CD8-positive, alpha-beta memory T cell (primary cell): ENCODE measurements at regions of chr7 and their contacts with region 1.

Region 1: DNA sequence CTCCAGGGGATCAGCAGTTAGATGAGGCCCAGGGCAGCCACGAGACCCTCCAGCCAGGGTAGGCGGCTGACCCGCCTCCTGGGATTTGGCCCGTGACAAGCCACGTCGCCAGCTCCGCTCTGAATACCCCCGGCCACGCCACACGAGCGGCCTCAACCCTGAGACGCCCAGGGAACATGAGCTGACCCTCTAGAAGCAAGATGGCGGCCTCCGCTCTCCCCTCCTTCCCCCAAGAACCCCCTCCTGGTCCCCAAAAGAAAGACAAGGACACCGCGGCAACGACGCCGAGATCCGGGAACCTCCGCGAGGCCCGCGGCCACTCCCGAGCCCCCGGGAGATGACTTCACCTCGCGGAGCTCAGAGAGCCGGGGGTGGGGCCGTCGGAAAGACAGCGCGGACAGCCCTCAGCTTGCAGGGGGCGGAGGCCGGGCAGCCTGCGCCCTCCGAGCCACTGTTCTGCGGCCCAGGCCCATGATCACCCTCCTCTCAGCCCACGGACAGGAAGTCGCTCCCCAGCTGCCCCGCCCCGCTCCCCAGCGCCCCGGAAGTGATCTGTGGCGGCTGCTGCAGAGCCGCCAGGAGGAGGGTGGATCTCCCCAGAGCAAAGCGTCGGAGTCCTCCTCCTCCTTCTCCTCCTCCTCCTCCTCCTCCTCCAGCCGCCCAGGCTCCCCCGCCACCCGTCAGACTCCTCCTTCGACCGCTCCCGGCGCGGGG is at the start of gene RALA:
- DNase-seq: peak; percentile 85 to 91 (median 86)
- H3K4me3 ChIP-seq: peak within 1 kb of the TSS; percentile 75
- H3K4me3 Mint-ChIP-seq: peak within 1 kb of the TSS; percentile 89 to 97 (median 94)
- H3K27ac ChIP-seq: peak within 1 kb of the TSS; percentile 83
- H3K27ac Mint-ChIP-seq: peak within 1 kb of the TSS; percentile 87 to 98 (median 93)
- H3K4me1 ChIP-seq: peaks cover 51% of the 10 kb centered on the region
- H3K4me1 Mint-ChIP-seq: peaks cover 42 to 54% (median 53%) of the 10 kb centered on the region in 3 donors
- H3K27me3 ChIP-seq: no peaks in the 10 kb centered on the region
- H3K27me3 Mint-ChIP-seq: no peaks in the 10 kb centered on the region
- total RNA-seq, gene RALA: 32.9 to 33.0 TPM

Region 2: GRCh38 chr7:39580149-39580874 is 42.9 kb before region 1 on chr7:
- CTCF ChIA-PET with region 1: interaction called, 30 read pairs
- POLR2A ChIA-PET with region 1: no interaction called
- DNase-seq: peak; percentile 59 to 82 (median 66)
- H3K4me3 ChIP-seq: no peak overlapping the region
- H3K4me3 Mint-ChIP-seq: no peak overlapping the region
- H3K27ac ChIP-seq: no peak overlapping the region
- H3K27ac Mint-ChIP-seq: peak overlapping the region in 1 of 8 donors; percentile 10
- H3K4me1 ChIP-seq: no peaks in the 10 kb centered on the region
- H3K4me1 Mint-ChIP-seq: peaks cover 3 to 4% (median 4%) of the 10 kb centered on the region in 3 donors
- H3K27me3 ChIP-seq: no peaks in the 10 kb centered on the region
- H3K27me3 Mint-ChIP-seq: no peaks in the 10 kb centered on the region

Region 3: GRCh38 chr7:39605087-39605486 is 18.1 kb before region 1 on chr7:
- CTCF ChIA-PET with region 1: no interaction called
- POLR2A ChIA-PET with region 1: no interaction called
- DNase-seq: no peak
- H3K4me3 ChIP-seq: no peak overlapping the region
- H3K4me3 Mint-ChIP-seq: peak overlapping the region in 1 of 7 donors; percentile 1
- H3K27ac ChIP-seq: no peak overlapping the region
- H3K27ac Mint-ChIP-seq: peak overlapping the region in 1 of 8 donors; percentile 7
- H3K4me1 ChIP-seq: peaks cover 32% of the 10 kb centered on the region
- H3K4me1 Mint-ChIP-seq: peaks cover 14 to 40% (median 32%) of the 10 kb centered on the region in 3 donors
- H3K27me3 ChIP-seq: no peaks in the 10 kb centered on the region
- H3K27me3 Mint-ChIP-seq: peaks cover 12 to 27% of the 10 kb centered on the region in 2 donors

Region 4: DNA sequence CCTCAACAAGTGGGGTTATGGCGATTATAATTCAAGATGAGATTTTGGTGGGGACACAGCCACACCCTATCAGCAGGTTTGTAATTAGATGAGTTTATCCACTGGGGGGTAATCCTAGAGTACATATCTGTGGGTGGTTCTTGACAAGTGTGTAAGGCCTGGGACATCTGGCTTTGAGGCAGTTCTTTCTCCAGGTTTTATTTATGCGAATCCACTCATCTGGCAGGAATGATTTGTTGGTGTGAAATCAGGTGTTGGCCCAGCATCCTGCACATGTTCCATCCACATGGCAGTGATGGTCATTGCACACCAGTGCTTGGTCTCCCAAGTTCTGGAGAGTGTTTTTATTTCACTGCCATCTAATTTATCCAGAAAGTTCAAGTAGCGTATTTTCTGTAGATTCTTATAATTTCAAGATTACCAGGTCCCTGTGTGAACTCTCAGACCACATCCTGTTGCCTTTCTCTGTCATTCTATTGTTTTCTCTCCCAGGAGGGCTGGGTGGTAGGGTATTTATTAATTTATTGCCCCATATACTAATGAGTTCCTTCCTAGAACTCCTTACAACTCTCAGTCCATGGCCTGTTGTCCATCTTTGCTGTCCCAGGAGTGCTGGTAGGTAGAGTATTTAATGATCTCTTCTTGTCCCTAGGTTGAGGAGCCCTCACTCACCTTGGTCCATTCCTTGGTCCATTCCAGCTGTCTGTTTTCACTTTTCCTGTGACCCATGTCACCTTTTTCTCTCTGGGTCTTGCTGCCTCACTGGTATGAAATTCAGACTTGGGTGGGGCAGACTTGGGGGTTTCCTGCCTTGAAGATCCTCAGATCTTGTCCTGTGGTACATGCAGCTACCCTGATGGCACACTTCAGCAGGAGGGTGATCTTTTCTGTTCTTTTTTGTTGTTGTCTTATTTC is 10.6 kb after region 1 on chr7:
- CTCF ChIA-PET with region 1: interaction called, 3 read pairs
- POLR2A ChIA-PET with region 1: interaction called, 10 read pairs
- DNase-seq: peak in 3 of 5 donors; percentile 44 to 72 (median 59)
- H3K4me3 ChIP-seq: peak overlapping the region; percentile 2
- H3K4me3 Mint-ChIP-seq: peak overlapping the region; percentile 23 to 88 (median 69)
- H3K27ac ChIP-seq: peak overlapping the region; percentile 15
- H3K27ac Mint-ChIP-seq: peak overlapping the region; percentile 90 to 97 (median 94)
- H3K4me1 ChIP-seq: peaks cover 53% of the 10 kb centered on the region
- H3K4me1 Mint-ChIP-seq: peaks cover 61 to 88% (median 81%) of the 10 kb centered on the region in 3 donors
- H3K27me3 ChIP-seq: no peaks in the 10 kb centered on the region
- H3K27me3 Mint-ChIP-seq: no peaks in the 10 kb centered on the region

Region 5: DNA sequence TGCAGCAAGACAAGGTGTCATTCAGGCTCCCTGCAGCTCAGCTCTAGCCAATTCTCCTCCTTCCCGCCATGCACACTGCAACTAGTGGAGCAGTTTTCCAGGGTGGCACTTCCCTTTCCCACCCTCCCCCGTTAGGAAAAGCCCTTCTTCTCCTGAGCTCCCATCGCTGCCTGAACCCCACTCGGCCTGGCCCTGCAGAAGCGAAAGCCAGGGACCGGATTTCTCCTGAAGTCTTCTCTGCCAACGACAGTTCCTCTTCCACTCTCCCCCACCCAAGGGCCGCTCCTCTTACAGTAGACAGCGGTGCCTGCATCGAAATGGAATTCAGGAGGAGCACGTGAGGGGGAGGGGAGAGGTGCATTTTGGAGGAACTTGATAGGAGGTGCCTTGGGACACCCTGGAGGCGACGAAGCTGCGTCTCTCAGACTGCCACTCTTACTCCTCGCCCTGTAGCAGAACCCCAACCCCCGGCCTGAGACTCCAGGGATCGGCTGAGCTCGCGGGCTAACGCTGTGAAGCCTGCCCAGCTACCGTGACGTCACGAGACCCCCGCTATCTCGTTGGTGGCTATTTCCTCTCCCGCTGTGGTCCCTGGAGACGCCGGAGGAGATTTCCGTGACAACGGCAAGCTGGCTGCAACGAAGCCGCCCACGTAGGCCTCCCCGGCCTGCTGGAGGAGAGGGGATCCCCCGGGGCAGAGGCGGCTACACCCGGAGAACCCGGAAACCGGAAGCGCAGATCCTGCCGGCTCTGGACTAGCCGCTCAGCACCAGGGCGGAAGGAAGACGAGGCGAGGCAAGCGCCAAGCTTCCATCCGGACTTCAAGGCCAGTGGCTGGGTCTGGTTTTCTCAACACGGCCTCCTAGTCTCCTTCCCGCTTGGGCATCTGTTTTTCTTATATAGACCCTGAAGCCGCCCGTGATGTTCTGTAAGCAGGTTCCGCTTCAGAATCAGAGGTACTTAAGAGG is 109.9 kb after region 1 on chr7:
- CTCF ChIA-PET with region 1: no interaction called
- POLR2A ChIA-PET with region 1: interaction called, 14 read pairs
- DNase-seq: peak; percentile 87 to 97 (median 92)
- H3K4me3 ChIP-seq: peak overlapping the region; percentile 75
- H3K4me3 Mint-ChIP-seq: peak overlapping the region; percentile 91 to 98 (median 94)
- H3K27ac ChIP-seq: peak overlapping the region; percentile 85
- H3K27ac Mint-ChIP-seq: peak overlapping the region; percentile 91 to 99 (median 97)
- H3K4me1 ChIP-seq: peaks cover 25% of the 10 kb centered on the region
- H3K4me1 Mint-ChIP-seq: peaks cover 41 to 65% (median 47%) of the 10 kb centered on the region in 3 donors
- H3K27me3 ChIP-seq: no peaks in the 10 kb centered on the region
- H3K27me3 Mint-ChIP-seq: no peaks in the 10 kb centered on the region

Region 6: GRCh38 chr7:39979406-39980073 is 356.4 kb after region 1 on chr7:
- CTCF ChIA-PET with region 1: no interaction called
- POLR2A ChIA-PET with region 1: no interaction called
- DNase-seq: peak in 4 of 5 donors; percentile 24 to 65 (median 38)
- H3K4me3 ChIP-seq: no peak overlapping the region
- H3K4me3 Mint-ChIP-seq: no peak overlapping the region
- H3K27ac ChIP-seq: no peak overlapping the region
- H3K27ac Mint-ChIP-seq: no peak overlapping the region
- H3K4me1 ChIP-seq: peaks cover 46% of the 10 kb centered on the region
- H3K4me1 Mint-ChIP-seq: peaks cover 17 to 28% (median 23%) of the 10 kb centered on the region in 3 donors
- H3K27me3 ChIP-seq: no peaks in the 10 kb centered on the region
- H3K27me3 Mint-ChIP-seq: no peaks in the 10 kb centered on the region